ENCODE measurements at regions of chr3 and their contacts with region 1.

Region 1: GRCh38 chr3:149581681-149582370 is 76.0 kb downstream of the WWTR1 start:
- DNase-seq: peak; percentile 97
- ATAC-seq: peak; percentile 40
- H3K4me3 ChIP-seq: peak overlapping the region; percentile 53
- H3K27ac ChIP-seq: peak overlapping the region; percentile 99
- H3K4me1 ChIP-seq: peaks cover 91% of the 10 kb centered on the region
- H3K27me3 ChIP-seq: no peaks in the 10 kb centered on the region
- CTCF ChIP-seq: no peak

Region 2: GRCh38 chr3:149377408-149378377 is 204.1 kb before region 1 on chr3 and contains the start of gene TM4SF1:
- CTCF ChIA-PET with region 1: no interaction called
- POLR2A ChIA-PET with region 1: interaction called, 11 read pairs
- intact Hi-C with region 1: loop called (anchors 5 kb)
- DNase-seq: peak; percentile 98
- ATAC-seq: peak; percentile 80
- H3K4me3 ChIP-seq: peak within 1 kb of the TSS; percentile 90
- H3K27ac ChIP-seq: peak within 1 kb of the TSS; percentile 99
- H3K4me1 ChIP-seq: peaks cover 63% of the 10 kb centered on the region
- H3K27me3 ChIP-seq: no peaks in the 10 kb centered on the region
- CTCF ChIP-seq: no peak
- total RNA-seq, gene TM4SF1: 408 and 535 TPM in 2 replicates

Region 3: GRCh38 chr3:149547938-149548668 is 33.7 kb before region 1 on chr3:
- CTCF ChIA-PET with region 1: no interaction called
- POLR2A ChIA-PET with region 1: interaction called, 12 read pairs
- intact Hi-C with region 1: no loop called
- DNase-seq: peak; percentile 72
- ATAC-seq: peak; percentile 70
- H3K4me3 ChIP-seq: peak overlapping the region; percentile 3; the same call in 1 of the 2 replicates
- H3K27ac ChIP-seq: peak overlapping the region; percentile 88
- H3K4me1 ChIP-seq: peaks cover 22% of the 10 kb centered on the region
- H3K27me3 ChIP-seq: no peaks in the 10 kb centered on the region
- CTCF ChIP-seq: no peak

Region 4: DNA sequence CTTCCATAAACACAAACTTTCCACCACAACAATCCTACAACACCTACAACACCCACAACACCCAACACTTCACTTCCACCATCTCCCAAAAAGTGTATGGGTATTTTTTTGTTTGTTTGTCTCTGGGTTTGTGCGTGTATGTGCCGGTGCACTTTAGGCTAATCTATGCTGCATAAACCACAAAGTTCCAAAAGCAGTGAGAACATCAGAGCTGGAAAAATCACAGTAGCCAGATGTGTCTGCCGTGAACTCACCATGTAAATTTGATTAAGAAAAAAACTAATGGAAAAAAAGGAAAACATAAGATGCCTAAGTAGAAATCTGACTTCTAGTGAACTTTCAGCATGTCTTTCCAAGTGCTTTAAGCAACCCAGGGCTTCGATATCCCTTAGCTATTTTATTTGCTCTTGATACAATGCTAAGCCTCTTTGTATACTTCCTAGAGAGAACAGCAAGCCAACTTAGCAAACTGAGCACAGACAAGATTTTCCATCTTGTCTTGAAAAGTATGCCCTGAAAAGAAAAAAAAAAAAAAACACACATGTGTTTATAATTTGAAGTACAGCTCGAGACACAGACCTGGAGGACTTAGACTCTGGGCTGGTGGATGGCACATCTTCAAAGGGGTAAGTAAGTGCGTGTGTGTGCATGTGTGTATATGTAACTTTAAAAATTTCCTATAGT is 15.4 kb before region 1 on chr3:
- CTCF ChIA-PET with region 1: interaction called, 12 read pairs
- POLR2A ChIA-PET with region 1: interaction called, 5 read pairs
- intact Hi-C with region 1: no loop called
- DNase-seq: no peak
- ATAC-seq: no peak
- H3K4me3 ChIP-seq: no peak overlapping the region
- H3K27ac ChIP-seq: no peak overlapping the region
- H3K4me1 ChIP-seq: peaks cover 7% of the 10 kb centered on the region
- H3K27me3 ChIP-seq: no peaks in the 10 kb centered on the region
- CTCF ChIP-seq: no peak

Region 5: DNA sequence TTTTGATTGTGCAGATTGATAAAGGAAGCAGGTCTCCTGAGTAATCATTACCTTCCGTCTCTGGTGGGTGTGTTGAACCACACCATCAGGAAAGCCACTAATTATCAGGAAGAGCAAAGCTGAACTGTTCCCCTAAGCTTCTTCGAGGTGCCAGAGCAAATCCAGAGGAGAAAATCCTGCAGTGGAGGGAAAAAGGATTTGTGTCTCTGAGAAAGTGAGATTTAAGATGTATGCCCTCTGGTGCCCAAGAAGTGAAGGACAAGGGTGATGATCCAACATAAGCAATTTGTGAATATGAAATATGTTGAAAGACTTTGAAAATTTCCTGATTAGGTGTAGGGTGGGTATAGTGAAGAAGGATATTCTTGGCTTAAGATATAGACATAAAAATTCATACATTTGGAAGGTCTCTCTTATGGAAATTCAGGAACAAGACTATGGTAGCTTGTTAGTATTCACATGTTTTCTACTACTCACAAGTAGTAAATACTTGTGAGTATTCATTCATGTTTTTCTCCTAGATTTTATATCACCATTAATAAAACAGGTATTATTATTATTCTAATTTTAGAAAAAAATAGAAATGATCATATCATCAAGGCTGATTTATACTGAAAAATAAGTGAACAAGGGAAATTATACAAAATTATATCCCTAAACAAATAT is 135.7 kb after region 1 on chr3:
- CTCF ChIA-PET with region 1: no interaction called
- POLR2A ChIA-PET with region 1: no interaction called
- intact Hi-C with region 1: loop called (anchors 5 kb)
- DNase-seq: peak; percentile 88
- ATAC-seq: peak; percentile 83
- H3K4me3 ChIP-seq: no peak overlapping the region
- H3K27ac ChIP-seq: no peak overlapping the region
- H3K4me1 ChIP-seq: peaks cover 5% of the 10 kb centered on the region; the same call in 1 of the 2 replicates
- H3K27me3 ChIP-seq: no peaks in the 10 kb centered on the region
- CTCF ChIP-seq: peak; percentile 89

Measured in PC-3 (cell line).